Activated naive CD4-positive, alpha-beta T cell treated with anti-CD3 and anti-CD28 coated beads for 36 hours (primary cell): ENCODE measurements at regions of chr12 and their contacts with region 1.

Region 1: DNA sequence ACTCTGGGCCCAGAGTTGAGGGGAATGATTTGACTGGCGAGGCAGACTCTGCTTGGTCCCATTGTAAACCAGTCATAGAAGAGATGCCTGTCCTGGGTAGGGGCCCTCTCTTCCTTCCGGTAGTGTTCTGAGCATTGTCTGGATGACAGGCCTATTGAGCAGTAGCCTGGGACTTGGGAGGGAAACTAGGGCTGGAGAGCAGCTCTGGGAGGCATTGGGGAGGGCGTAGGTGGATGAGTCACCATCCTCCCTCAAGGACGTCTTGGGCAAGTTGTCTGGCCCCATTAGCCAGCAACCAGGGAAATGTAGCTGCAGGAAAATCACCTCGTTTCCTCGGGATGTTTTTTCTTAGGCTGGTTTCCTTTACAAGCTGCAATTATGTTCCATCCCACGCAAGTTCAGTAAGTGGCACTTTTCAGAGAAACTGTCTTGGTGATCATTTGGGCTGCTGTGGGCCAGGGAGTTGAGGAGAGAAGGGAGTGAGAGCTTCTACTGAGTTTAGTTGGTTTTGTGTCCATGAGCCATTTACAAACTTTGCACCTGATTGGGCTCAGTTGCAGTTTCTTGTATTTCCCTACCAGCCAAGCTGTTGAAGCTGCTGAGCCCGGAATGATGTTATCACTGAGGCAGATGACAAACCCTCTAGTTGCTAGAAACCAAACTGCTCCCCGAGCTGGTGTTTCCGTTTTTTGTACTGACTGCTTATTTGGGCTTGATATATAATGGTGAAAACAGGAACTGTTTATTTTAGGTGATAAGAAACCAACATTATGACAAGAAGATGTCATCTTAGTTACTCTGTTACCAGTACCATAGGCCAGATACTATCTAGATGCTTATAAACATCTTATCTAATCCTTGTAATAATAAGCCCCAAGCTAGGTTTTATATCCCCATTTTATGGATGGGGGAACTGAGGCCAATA is 147.6 kb downstream of the CHST11 start:
- DNase-seq: peak; percentile 60
- H3K4me3 Mint-ChIP-seq: no peak overlapping the region
- H3K27ac Mint-ChIP-seq: peak overlapping the region; percentile 58
- H3K4me1 Mint-ChIP-seq: peaks cover 27% of the 10 kb centered on the region
- H3K27me3 Mint-ChIP-seq: no peaks in the 10 kb centered on the region

Region 2: GRCh38 chr12:104399740-104400612 is 204.4 kb before region 1 on chr12:
- CTCF ChIA-PET with region 1: no interaction called
- intact Hi-C with region 1: no loop called
- DNase-seq: no peak
- H3K4me3 Mint-ChIP-seq: no peak overlapping the region
- H3K27ac Mint-ChIP-seq: no peak overlapping the region
- H3K4me1 Mint-ChIP-seq: no peaks in the 10 kb centered on the region
- H3K27me3 Mint-ChIP-seq: no peaks in the 10 kb centered on the region

Region 3: GRCh38 chr12:104526320-104526719 is 78.0 kb before region 1 on chr12:
- CTCF ChIA-PET with region 1: no interaction called
- intact Hi-C with region 1: no loop called
- DNase-seq: no peak
- H3K4me3 Mint-ChIP-seq: no peak overlapping the region
- H3K27ac Mint-ChIP-seq: no peak overlapping the region
- H3K4me1 Mint-ChIP-seq: peaks cover 32% of the 10 kb centered on the region
- H3K27me3 Mint-ChIP-seq: no peaks in the 10 kb centered on the region

Region 4: DNA sequence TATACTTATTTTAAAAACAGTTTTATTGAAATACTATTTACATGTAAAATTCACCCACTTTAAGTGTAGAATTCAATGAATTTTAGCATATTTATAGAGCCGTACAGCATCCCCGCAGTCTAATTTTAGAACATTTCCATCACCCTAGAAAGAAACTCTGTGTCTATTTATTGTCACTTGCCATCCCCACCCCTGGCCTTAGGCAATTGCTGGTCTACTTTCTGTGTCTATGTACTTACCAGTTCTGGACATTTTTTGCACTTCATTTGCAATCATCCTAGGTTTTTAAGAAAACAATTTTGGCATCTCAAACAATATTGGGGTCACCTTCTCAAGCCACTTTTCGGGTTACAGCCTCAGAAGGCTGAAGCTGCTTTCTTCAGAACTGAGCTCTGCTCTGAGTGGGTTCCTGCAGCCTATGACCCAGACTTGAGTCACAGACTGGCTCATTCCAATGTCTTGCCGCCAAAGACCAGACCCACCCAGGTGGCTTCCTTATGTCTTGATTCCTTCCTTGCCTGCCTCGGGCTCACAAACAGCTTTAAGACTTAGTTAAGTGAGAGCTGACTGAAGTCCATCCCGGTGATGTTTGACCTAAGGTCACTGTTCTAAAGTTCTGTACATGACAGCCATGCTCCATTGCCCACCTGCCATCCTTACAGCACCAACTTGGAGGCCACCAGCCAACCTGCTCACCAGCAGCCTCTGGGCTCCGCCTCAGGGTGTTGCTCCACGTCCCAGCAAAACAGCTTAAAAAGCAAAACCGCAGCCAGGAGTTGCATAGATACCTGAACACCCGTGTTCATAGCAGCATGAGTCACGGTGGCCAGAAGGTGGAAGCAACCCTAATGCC is 16.0 kb before region 1 on chr12:
- CTCF ChIA-PET with region 1: no interaction called
- intact Hi-C with region 1: no loop called
- DNase-seq: no peak
- H3K4me3 Mint-ChIP-seq: no peak overlapping the region
- H3K27ac Mint-ChIP-seq: no peak overlapping the region
- H3K4me1 Mint-ChIP-seq: peaks cover 10% of the 10 kb centered on the region
- H3K27me3 Mint-ChIP-seq: no peaks in the 10 kb centered on the region

Region 5: GRCh38 chr12:104641862-104642261 is 37.5 kb after region 1 on chr12:
- CTCF ChIA-PET with region 1: interaction called, 3 read pairs
- intact Hi-C with region 1: loop called (anchors 2 kb)
- DNase-seq: no peak
- H3K4me3 Mint-ChIP-seq: no peak overlapping the region
- H3K27ac Mint-ChIP-seq: no peak overlapping the region
- H3K4me1 Mint-ChIP-seq: peaks cover 28% of the 10 kb centered on the region
- H3K27me3 Mint-ChIP-seq: no peaks in the 10 kb centered on the region